CD4-positive, alpha-beta memory T cell (primary cell): ENCODE measurements at regions of chrX and their contacts with region 1.

Region 1: DNA sequence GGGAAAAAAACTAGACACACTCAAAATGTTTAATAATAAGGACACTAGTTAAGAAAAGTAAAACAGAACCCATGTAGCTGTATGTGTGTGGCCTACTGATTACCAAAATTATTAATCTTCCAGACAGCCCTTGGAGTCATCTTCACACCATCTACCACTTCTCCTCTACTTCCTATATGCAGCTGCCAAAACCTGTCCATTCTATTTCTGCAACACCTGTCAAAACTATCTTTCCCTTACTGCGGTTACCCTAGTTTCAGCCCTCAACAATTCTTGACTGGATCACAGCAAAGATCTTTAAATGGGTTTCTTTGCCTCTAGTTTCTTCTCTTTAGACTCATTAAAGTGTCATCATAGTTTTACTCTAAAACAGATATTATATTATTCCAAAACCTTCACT is 72.6 kb downstream of the GPR82 start:
- DNase-seq: peak in 3 of 5 donors; percentile 2 to 37 (median 6)
- H3K4me3 ChIP-seq: no peak overlapping the region
- H3K4me3 Mint-ChIP-seq: peak overlapping the region in 2 of 8 donors; percentile 15 to 63
- H3K27ac ChIP-seq: no peak overlapping the region
- H3K27ac Mint-ChIP-seq: peak overlapping the region in 3 of 7 donors; percentile 3 to 68 (median 5)
- H3K4me1 ChIP-seq: peaks cover 45% of the 10 kb centered on the region
- H3K4me1 Mint-ChIP-seq: peaks cover 19 to 45% (median 33%) of the 10 kb centered on the region in 4 donors
- H3K27me3 ChIP-seq: no peaks in the 10 kb centered on the region
- H3K27me3 Mint-ChIP-seq: no peaks in the 10 kb centered on the region

Region 2: DNA sequence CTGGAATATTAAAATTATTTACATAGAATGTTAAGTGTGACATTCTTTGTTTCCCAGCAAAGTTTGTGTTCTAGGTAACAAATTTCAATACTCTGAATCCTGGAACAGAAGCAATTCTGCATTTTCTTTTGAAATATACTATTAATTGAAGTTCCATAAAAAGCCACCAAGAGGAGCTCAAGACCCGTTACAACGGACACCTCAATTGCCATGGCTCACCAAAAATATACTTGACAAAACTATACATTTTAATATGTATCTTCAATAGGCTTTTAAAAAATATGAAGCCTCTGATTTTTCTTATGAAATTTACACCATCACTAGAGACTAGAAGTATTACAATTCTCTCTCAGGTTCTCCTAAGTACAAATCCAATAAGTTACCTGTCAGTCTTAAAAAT is 238.0 kb before region 1 on chrX:
- CTCF ChIA-PET with region 1: interaction called, 3 read pairs
- POLR2A ChIA-PET with region 1: no interaction called
- intact Hi-C with region 1: loop called (anchors 5 kb)
- DNase-seq: peak in 1 of 5 donors; percentile 25
- H3K4me3 ChIP-seq: no peak overlapping the region
- H3K4me3 Mint-ChIP-seq: no peak overlapping the region
- H3K27ac ChIP-seq: no peak overlapping the region
- H3K27ac Mint-ChIP-seq: peak overlapping the region in 6 of 7 donors; percentile 18 to 95 (median 72)
- H3K4me1 ChIP-seq: peaks cover 57% of the 10 kb centered on the region
- H3K4me1 Mint-ChIP-seq: peaks cover 25 to 52% (median 31%) of the 10 kb centered on the region in 4 donors
- H3K27me3 ChIP-seq: no peaks in the 10 kb centered on the region
- H3K27me3 Mint-ChIP-seq: no peaks in the 10 kb centered on the region

Region 3: DNA sequence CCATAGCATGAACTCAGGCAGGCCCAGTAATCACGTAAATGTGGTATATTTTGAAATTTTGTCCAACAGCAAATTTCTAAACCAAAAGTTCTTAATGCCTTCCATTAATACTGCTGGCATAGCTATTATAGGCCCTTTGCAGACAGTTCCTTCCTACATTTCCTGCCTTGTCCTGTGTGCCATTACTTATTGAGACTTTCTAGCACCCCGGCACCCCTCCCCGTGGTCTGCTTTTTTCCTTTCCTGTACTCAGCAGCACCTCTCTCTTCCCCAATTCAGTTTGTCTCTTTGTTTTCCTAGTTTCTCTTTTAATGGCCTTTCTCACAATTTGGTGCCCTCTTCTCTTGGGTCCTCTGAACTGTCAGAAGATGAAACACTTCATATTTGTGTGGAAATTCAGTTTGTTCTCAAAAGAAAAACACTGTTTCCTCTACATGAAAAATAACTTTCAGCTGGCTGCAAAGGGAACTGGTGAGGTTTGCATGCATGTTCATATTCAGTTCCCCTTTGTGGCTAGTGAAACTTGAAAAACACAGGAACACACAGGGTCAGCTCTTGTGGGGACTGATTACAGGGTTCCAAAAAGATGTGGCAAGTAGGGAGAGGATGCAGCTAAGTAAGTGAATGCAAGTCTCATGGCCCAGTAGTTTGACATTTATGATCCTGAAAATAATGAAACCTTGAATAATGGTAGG is 90.8 kb before region 1 on chrX:
- CTCF ChIA-PET with region 1: no interaction called
- POLR2A ChIA-PET with region 1: no interaction called
- intact Hi-C with region 1: no loop called
- DNase-seq: no peak
- H3K4me3 ChIP-seq: no peak overlapping the region
- H3K4me3 Mint-ChIP-seq: peak overlapping the region in 2 of 8 donors; percentile 46 to 76
- H3K27ac ChIP-seq: no peak overlapping the region
- H3K27ac Mint-ChIP-seq: peak overlapping the region; percentile 11 to 66 (median 43)
- H3K4me1 ChIP-seq: peaks cover 30% of the 10 kb centered on the region
- H3K4me1 Mint-ChIP-seq: peaks cover 23 to 44% (median 30%) of the 10 kb centered on the region in 4 donors
- H3K27me3 ChIP-seq: no peaks in the 10 kb centered on the region
- H3K27me3 Mint-ChIP-seq: no peaks in the 10 kb centered on the region

Region 4: DNA sequence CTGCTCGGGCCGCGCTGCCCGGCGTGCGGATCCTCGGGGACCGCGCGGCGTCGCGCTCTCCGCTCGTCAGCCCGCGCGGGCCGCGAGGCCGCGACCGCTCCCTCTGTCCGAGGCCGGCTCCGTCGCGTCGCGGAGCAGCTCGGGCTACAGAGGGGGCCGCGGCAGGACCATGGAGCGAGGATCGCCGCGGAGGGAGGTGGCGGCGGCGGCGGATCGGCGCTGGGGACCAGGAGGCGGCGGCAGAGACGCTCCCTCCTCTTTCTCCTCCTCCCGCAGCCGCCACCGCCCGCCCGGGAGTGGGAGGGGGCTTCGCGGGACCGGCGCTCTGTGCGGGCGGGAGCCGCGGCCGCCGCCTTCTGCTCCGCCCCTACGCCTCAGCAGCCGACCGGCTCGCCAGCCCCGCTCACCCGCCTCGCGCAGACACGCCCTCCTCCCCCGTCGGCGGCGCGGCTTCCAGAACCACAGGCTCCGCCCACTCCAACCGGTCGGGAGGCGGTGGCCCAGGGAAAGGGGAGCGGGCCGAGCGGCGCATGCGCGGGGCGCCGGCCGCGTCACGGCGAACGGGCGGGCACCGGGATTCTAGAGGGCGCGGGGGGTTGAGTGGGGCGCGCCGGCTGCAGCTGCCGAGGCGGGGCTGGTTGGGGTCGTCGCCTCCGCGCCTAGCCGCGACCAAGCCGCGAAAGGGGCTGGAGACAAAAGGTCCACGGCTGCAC is 126.8 kb after region 1 on chrX and contains the start of gene CASK:
- CTCF ChIA-PET with region 1: interaction called, 3 read pairs
- POLR2A ChIA-PET with region 1: interaction called, 16 read pairs
- intact Hi-C with region 1: loop called (anchors 2 kb)
- DNase-seq: peak; percentile 88 to 90 (median 89)
- H3K4me3 ChIP-seq: peak within 1 kb of the TSS; percentile 55 to 72
- H3K4me3 Mint-ChIP-seq: peak within 1 kb of the TSS; percentile 88 to 96 (median 92)
- H3K27ac ChIP-seq: peak within 1 kb of the TSS; percentile 58
- H3K27ac Mint-ChIP-seq: peak within 1 kb of the TSS; percentile 86 to 95 (median 94)
- H3K4me1 ChIP-seq: peaks cover 21% of the 10 kb centered on the region
- H3K4me1 Mint-ChIP-seq: peaks cover 10 to 43% (median 22%) of the 10 kb centered on the region in 4 donors
- H3K27me3 ChIP-seq: no peaks in the 10 kb centered on the region
- H3K27me3 Mint-ChIP-seq: no peaks in the 10 kb centered on the region
- total RNA-seq, gene CASK: 115 to 116 TPM

Region 5: GRCh38 chrX:43121637-43122036 is 1325.1 kb after region 1 on chrX:
- CTCF ChIA-PET with region 1: interaction called, 11 read pairs
- POLR2A ChIA-PET with region 1: interaction called, 3 read pairs
- intact Hi-C with region 1: loop called (anchors 5 kb)
- DNase-seq: peak in 4 of 5 donors; percentile 13 to 40 (median 14)
- H3K4me3 ChIP-seq: no peak overlapping the region
- H3K4me3 Mint-ChIP-seq: no peak overlapping the region
- H3K27ac ChIP-seq: no peak overlapping the region
- H3K27ac Mint-ChIP-seq: peak overlapping the region in 2 of 7 donors; percentile 62 to 73
- H3K4me1 ChIP-seq: no peaks in the 10 kb centered on the region
- H3K4me1 Mint-ChIP-seq: peaks cover 0 to 6% (median 3%) of the 10 kb centered on the region in 4 donors
- H3K27me3 ChIP-seq: no peaks in the 10 kb centered on the region
- H3K27me3 Mint-ChIP-seq: no peaks in the 10 kb centered on the region

Region 6: GRCh38 chrX:43333543-43333942 is 1537.0 kb after region 1 on chrX:
- CTCF ChIA-PET with region 1: no interaction called
- POLR2A ChIA-PET with region 1: no interaction called
- intact Hi-C with region 1: loop called (anchors 5 kb)
- DNase-seq: peak in 1 of 5 donors; percentile 7
- H3K4me3 ChIP-seq: no peak overlapping the region
- H3K4me3 Mint-ChIP-seq: no peak overlapping the region
- H3K27ac ChIP-seq: no peak overlapping the region
- H3K27ac Mint-ChIP-seq: peak overlapping the region in 1 of 7 donors; percentile 13
- H3K4me1 ChIP-seq: no peaks in the 10 kb centered on the region
- H3K4me1 Mint-ChIP-seq: peaks cover 0 to 2% (median 0%) of the 10 kb centered on the region in 4 donors
- H3K27me3 ChIP-seq: no peaks in the 10 kb centered on the region
- H3K27me3 Mint-ChIP-seq: no peaks in the 10 kb centered on the region